MCF 10A (cell line): ENCODE measurements at regions of chr17 and their contacts with region 1.

Region 1: GRCh38 chr17:43442711-43443110 is 41.1 kb upstream of the DHX8 start:
- DNase-seq: peak; percentile 66
- H3K4me3 Mint-ChIP-seq: no peak overlapping the region
- H3K27ac Mint-ChIP-seq: no peak overlapping the region
- H3K4me1 Mint-ChIP-seq: peaks cover 22% of the 10 kb centered on the region
- H3K27me3 Mint-ChIP-seq: no peaks in the 10 kb centered on the region
- CTCF ChIP-seq: no peak

Region 2: GRCh38 chr17:42832974-42833766 is 609.5 kb before region 1 on chr17 and contains the start of gene PSME3:
- CTCF ChIA-PET with region 1: no interaction called
- POLR2A ChIA-PET with region 1: no interaction called
- intact Hi-C with region 1: no loop called
- DNase-seq: peak; percentile 87
- H3K4me3 Mint-ChIP-seq: peak within 1 kb of the TSS; percentile 96
- H3K27ac Mint-ChIP-seq: peak within 1 kb of the TSS; percentile 99
- H3K4me1 Mint-ChIP-seq: peaks cover 25% of the 10 kb centered on the region
- H3K27me3 Mint-ChIP-seq: no peaks in the 10 kb centered on the region
- CTCF ChIP-seq: no peak
- total RNA-seq, gene PSME3: 220 and 232 TPM in 2 replicates

Region 3: GRCh38 chr17:43388359-43389045 is 54.2 kb before region 1 on chr17:
- CTCF ChIA-PET with region 1: interaction called, 3 read pairs
- POLR2A ChIA-PET with region 1: interaction called, 15 read pairs
- intact Hi-C with region 1: no loop called
- DNase-seq: peak; percentile 94
- H3K4me3 Mint-ChIP-seq: peak overlapping the region; percentile 83
- H3K27ac Mint-ChIP-seq: peak overlapping the region; percentile 97
- H3K4me1 Mint-ChIP-seq: peaks cover 18% of the 10 kb centered on the region
- H3K27me3 Mint-ChIP-seq: no peaks in the 10 kb centered on the region
- CTCF ChIP-seq: no peak

Region 4: GRCh38 chr17:43400943-43401692 is 41.6 kb before region 1 on chr17:
- CTCF ChIA-PET with region 1: no interaction called
- POLR2A ChIA-PET with region 1: interaction called, 134 read pairs
- intact Hi-C with region 1: loop called (anchors 1 kb)
- DNase-seq: peak; percentile 86
- H3K4me3 Mint-ChIP-seq: peak overlapping the region; percentile 92
- H3K27ac Mint-ChIP-seq: peak overlapping the region; percentile 57
- H3K4me1 Mint-ChIP-seq: peaks cover 21% of the 10 kb centered on the region
- H3K27me3 Mint-ChIP-seq: no peaks in the 10 kb centered on the region
- CTCF ChIP-seq: no peak

Region 5: GRCh38 chr17:43406676-43407645 is 35.8 kb before region 1 on chr17:
- CTCF ChIA-PET with region 1: interaction called, 3 read pairs
- POLR2A ChIA-PET with region 1: interaction called, 134 read pairs
- intact Hi-C with region 1: no loop called
- DNase-seq: no peak
- H3K4me3 Mint-ChIP-seq: no peak overlapping the region
- H3K27ac Mint-ChIP-seq: no peak overlapping the region
- H3K4me1 Mint-ChIP-seq: peaks cover 28% of the 10 kb centered on the region
- H3K27me3 Mint-ChIP-seq: no peaks in the 10 kb centered on the region
- CTCF ChIP-seq: no peak

Region 6: DNA sequence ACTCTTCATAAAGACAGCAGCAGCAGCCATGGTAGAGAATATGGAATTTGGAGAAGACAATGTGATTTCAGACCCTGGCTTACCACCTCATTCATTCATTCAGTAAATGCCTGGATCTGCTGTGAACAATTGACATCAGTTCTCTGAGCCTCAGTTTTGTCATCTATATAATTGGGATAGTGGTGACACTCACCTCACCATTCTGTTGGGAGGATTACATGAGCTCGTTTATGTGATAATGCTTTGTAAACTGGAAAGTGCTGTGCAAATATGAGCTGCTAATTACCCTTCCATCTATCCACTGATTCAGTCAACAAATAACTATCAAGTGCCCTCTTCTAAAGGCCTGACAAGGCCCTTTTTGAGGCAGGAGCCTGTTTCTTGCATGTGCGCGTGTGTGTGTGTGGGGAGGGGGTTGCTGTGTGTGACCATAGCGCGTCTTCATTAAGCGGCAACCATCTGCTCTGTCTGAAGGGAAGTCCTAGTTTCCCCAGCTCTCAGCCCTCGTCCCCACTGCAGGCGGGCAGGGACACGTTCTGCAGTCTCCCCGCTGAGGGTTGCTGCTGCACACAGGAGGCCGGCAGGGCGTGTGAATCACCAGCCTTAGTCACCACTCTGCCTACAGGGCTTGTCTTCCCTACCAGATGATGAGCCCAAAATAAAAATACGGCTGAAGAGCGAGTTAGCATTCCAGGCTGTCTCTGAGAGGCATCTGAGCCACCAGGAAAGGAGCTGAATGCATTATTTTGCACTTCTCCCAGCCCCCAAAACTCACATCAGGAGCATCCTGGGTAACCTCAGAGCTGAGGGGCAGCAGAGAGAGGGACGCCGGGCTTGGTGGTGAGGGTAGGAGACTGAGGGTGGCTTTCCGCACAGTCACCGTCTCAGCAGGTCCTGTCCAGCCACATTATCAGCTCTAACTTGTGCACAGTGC is 24.0 kb before region 1 on chr17:
- CTCF ChIA-PET with region 1: interaction called, 9 read pairs
- POLR2A ChIA-PET with region 1: interaction called, 191 read pairs
- intact Hi-C with region 1: no loop called
- DNase-seq: peak; percentile 94
- H3K4me3 Mint-ChIP-seq: peak overlapping the region; percentile 59
- H3K27ac Mint-ChIP-seq: peak overlapping the region; percentile 76
- H3K4me1 Mint-ChIP-seq: peaks cover 41% of the 10 kb centered on the region
- H3K27me3 Mint-ChIP-seq: no peaks in the 10 kb centered on the region
- CTCF ChIP-seq: no peak

Region 7: DNA sequence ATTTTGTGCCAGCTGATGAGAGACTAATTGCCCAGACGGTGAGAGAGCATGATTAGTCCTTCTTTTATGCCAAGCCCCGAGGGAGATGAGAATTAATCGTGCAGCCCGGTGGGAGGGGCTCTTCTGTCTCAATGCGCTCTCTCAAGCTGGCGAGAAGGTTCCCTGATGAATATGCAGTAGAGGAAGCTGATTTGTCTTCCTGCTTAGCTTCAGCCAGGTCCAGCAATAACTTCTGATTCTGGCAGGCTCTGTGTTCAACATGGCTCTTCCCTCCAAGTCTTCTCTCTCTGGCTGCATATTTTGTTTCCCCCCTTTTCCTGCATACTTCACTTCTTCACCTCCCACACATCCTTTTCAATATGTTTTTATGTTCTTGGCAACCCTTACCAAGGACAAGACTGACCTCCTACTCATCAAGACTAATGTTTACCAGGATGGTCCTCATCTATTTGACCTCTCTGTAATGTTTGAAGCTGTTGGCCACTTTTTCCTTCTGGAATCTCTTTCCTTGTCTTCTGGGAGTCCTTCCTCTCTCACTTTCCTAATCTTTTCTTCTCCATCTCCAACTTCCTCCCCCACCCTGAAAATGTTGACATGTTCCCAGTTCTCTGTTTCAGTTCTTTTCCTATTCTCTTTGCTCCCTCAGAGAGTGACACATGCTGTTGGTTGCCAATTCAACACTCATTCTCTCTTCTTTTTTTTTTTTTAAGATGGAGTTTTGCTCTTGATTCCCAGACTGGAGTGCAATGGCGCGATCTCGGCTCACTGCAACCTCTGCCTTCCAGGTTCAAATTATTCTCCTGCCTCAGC is 10.8 kb before region 1 on chr17:
- CTCF ChIA-PET with region 1: interaction called, 3 read pairs
- POLR2A ChIA-PET with region 1: interaction called, 69 read pairs
- intact Hi-C with region 1: no loop called
- DNase-seq: peak; percentile 29
- H3K4me3 Mint-ChIP-seq: no peak overlapping the region
- H3K27ac Mint-ChIP-seq: no peak overlapping the region
- H3K4me1 Mint-ChIP-seq: peaks cover 40% of the 10 kb centered on the region
- H3K27me3 Mint-ChIP-seq: no peaks in the 10 kb centered on the region
- CTCF ChIP-seq: no peak

Region 8: DNA sequence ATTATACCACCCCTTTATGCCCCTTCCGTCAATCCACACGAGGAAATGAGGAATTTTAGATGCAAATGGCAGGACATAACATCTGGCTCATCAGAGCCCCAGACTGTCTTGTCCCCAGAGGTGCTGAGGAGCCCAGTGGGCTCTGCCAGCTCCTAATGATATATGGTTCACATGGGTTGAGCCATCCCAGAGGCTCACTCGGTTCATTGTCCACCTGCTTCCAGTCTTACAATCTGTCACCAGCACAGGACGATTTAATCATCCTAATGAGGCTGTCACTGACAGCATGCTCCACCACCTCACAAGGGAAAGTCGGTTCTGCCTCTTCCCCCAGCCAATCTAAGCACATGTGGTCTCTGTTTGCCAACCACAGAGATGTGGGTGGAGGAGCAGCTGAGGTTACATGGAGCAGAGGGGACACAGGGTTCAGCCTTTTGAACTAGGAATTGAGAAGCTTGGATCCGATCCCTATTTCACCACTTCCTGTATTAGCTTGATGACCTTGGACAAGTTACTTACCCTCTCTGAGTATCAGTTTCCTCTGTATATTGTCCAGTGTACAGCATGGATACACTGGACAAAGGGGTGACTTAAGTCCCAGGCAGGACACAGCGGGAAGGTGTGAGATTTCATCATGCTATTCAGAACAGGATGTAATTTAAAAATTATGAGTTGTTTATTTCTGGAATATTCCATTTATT is 14.1 kb after region 1 on chr17:
- CTCF ChIA-PET with region 1: interaction called, 7 read pairs
- POLR2A ChIA-PET with region 1: interaction called, 161 read pairs
- intact Hi-C with region 1: no loop called
- DNase-seq: peak; percentile 91
- H3K4me3 Mint-ChIP-seq: no peak overlapping the region
- H3K27ac Mint-ChIP-seq: peak overlapping the region; percentile 63
- H3K4me1 Mint-ChIP-seq: peaks cover 21% of the 10 kb centered on the region
- H3K27me3 Mint-ChIP-seq: no peaks in the 10 kb centered on the region
- CTCF ChIP-seq: no peak